Sigmoid colon (tissue), 7 donors: ENCODE measurements at regions of chr18 and their contacts with region 1.

Region 1: DNA sequence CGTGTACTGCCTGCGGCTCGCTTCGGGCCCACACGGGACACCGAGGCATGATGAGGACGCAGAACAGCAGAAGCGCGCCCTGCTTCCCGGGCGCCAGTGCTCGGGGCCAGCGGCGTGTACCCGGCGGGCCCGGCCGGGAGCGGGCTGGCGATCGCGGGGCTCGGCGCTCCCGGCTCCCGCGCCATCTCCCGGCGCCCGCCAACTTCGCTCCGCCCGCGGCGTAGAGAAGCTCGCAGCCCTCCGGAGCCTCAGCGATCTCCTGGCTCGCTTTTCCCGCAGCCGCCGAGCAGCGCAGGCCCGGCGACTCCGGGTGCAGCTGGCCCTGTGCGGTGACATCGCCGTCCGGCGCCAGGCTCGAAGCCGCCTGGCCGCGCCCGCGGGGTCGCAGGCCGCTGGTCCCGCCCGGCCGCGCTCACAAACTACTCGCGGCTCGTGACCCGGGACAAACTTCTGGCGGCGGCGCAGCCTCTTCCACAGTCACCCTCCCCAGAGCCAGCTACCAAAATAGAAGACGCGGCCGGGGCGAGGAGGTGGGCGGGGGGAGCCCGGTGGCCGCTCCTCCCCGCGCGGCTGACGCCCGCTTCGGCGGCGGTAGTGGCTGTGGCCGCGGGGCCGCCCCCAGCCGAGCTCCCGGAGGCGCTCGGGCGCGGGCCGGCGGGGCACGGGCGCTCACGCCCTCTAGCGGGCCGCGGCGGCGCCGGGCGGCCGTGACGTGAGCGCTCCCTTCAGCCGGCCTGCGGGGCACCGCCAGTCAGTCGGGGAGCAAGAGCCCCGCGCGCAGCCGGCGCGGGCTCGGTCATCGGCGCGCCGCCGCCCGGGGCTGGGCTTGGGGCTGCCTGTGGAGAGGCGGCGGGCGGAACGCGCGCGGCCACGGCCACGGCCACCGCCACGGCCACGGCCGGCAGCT is at the start of gene PTPRM:
- DNase-seq: peak; percentile 97
- H3K4me3 ChIP-seq: peak within 1 kb of the TSS; percentile 87 to 98 (median 94)
- H3K27ac ChIP-seq: peak within 1 kb of the TSS; percentile 94 to 96 (median 95)
- H3K4me1 ChIP-seq: peaks cover 0 to 49% (median 36%) of the 10 kb centered on the region in 4 donors
- H3K27me3 ChIP-seq: no peaks in the 10 kb centered on the region
- CTCF ChIP-seq: no peak
- EP300 ChIP-seq: peak in 1 of 4 donors; percentile 30
- POLR2A ChIP-seq: no peak
- total RNA-seq, gene PTPRM: 62.8 to 151 (median 73.4) TPM

Region 2: DNA sequence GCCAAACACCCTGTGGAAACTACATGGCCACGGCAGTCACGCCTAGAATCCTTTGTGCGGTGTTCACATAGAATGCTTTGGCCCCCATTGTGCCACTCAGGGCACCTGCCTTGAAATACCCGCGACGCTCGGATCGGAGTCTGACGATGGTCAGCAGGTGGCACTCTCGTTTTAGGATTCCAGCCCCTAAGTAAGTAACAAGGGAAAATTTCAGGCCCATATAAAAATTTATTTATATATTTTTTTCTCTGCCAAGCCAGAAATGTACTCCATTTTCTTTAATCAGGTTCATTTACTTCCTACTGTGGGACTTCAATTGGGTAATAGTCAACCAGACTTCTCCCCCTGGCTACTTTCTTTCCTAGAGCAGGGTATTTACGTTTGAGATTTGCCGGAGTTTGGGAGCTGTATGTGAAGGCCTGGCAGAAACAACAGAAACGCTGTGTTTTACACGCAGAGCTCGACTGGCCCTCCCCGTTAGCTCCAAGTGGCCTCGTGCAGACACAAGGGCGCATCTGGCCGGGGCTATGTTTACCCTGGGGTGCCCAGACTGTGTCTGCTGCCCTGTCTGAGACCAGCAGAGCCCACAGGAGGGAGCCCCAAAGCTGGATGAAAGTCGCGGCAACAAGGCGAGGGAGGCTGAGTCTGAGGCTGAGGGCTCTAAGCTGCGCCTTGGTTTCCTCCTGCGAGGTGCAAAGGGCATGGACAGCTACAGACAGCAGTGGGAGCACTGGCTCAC is 294.3 kb before region 1 on chr18:
- intact Hi-C with region 1: loop called (anchors 1 kb)
- DNase-seq: peak; percentile 85
- H3K4me3 ChIP-seq: peak overlapping the region in 3 of 4 donors; percentile 26 to 34 (median 33)
- H3K27ac ChIP-seq: peak overlapping the region; percentile 79 to 84 (median 81)
- H3K4me1 ChIP-seq: peaks cover 0 to 16% (median 13%) of the 10 kb centered on the region in 4 donors
- H3K27me3 ChIP-seq: no peaks in the 10 kb centered on the region
- CTCF ChIP-seq: peak; percentile 26 to 58 (median 42)
- EP300 ChIP-seq: no peak
- POLR2A ChIP-seq: no peak

Region 3: DNA sequence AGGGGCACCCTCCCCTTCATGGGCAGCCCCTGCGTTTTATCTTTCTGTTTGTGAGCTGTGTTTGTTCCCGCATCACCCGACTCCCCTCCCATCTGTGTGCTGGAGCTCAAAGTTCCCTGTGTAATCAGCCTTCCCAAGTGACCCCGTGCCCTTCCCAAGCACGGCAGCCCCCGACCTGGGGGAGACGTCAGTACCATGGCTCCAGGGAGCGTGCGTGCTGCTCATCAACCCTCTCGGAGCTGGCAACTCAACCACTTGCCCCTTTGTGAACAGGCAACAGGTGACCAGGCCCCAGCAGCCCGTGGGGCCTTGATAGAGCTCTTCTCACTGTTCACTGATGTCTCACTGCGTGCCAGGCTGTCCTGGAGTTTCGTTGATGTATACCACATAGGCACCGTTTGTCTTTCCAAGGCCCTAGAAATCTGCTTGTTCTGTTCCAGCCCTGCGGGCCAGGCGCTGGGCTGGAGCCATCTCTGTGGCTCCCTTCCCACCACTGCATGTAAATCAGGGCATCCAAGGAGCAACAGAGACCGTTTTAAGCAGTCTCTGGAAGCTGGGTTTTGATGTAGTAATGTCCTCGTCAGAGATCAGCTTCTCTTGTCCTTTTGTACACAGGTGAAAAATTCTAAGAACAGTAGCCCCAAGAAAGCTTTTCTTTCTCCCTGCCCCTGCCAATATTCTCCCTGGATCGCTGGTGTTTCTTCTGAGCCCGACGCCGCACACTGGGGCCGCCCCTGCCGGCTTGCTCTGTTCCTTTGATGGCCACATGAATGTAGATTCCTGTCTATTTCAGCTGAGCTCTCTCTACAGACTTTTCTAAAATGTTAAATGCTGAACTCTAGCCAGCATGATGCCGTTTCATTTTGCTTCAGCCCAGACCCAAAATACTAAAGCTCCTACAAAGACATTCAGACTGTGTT is 106.7 kb before region 1 on chr18:
- intact Hi-C with region 1: loop called (anchors 2 kb)
- DNase-seq: peak; percentile 77
- H3K4me3 ChIP-seq: peak overlapping the region in 3 of 4 donors; percentile 14 to 37 (median 25)
- H3K27ac ChIP-seq: peak overlapping the region; percentile 84 to 89 (median 85)
- H3K4me1 ChIP-seq: peaks cover 0 to 60% (median 56%) of the 10 kb centered on the region in 4 donors
- H3K27me3 ChIP-seq: no peaks in the 10 kb centered on the region
- CTCF ChIP-seq: no peak
- EP300 ChIP-seq: no peak
- POLR2A ChIP-seq: no peak

Region 4: GRCh38 chr18:7617738-7618422 is 51.1 kb after region 1 on chr18:
- intact Hi-C with region 1: loop called (anchors 5 kb)
- DNase-seq: peak; percentile 82
- H3K4me3 ChIP-seq: peak overlapping the region in 3 of 4 donors; percentile 18 to 26 (median 20)
- H3K27ac ChIP-seq: peak overlapping the region; percentile 2 to 76 (median 64)
- H3K4me1 ChIP-seq: peaks cover 0 to 51% (median 50%) of the 10 kb centered on the region in 4 donors
- H3K27me3 ChIP-seq: no peaks in the 10 kb centered on the region
- CTCF ChIP-seq: no peak
- EP300 ChIP-seq: no peak
- POLR2A ChIP-seq: no peak

Region 5: DNA sequence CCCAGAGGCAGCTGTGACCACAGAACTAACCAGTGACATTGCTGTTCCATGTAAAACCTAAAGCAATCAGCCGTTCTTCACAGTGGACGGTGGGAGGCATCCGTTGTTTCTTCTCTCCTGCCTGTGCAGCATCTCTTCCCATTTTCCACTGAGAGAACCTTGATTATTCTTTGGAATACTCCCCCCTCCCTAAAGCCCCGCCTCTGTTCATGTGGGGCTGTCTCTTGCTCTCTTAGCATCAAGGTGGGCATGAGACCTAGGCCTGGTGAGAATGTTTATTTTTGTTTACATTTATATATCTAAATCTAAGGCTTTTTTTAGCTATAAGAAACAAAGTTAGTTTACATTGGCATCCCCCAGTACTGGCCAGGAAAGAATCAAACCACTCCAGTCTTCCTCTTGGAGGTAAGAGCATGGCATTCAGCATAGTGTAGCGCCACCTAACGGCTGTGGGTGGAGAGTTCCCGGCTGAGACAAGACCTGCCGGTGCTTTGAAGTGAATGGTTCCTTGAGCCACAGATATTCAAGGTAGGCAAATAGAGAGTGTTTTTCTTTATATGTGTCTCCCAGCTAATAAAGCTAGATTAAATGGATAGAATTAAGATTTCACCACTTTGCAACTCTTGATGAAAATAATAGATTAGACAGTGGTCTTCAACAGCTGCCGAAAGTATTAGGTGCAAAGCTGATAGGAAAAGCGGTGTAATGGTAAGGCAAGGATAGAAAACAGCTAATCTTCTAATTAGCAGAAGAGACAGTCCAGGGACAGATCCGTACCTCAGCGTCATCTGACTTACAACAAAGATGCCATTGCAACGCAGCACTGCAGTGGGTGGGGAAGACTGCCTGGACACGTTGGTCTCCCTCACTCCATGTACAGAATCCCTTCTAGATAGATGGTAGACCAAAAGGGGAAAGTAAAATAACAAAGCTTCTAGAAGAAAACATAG is 822.8 kb after region 1 on chr18:
- intact Hi-C with region 1: loop called (anchors 2 kb)
- DNase-seq: peak; percentile 76
- H3K4me3 ChIP-seq: no peak overlapping the region
- H3K27ac ChIP-seq: no peak overlapping the region
- H3K4me1 ChIP-seq: no peaks in the 10 kb centered on the region
- H3K27me3 ChIP-seq: no peaks in the 10 kb centered on the region
- CTCF ChIP-seq: peak; percentile 35 to 73 (median 68)
- EP300 ChIP-seq: no peak
- POLR2A ChIP-seq: no peak